ENCODE measurements at regions of chr3 and their contacts with region 1.

Region 1: DNA sequence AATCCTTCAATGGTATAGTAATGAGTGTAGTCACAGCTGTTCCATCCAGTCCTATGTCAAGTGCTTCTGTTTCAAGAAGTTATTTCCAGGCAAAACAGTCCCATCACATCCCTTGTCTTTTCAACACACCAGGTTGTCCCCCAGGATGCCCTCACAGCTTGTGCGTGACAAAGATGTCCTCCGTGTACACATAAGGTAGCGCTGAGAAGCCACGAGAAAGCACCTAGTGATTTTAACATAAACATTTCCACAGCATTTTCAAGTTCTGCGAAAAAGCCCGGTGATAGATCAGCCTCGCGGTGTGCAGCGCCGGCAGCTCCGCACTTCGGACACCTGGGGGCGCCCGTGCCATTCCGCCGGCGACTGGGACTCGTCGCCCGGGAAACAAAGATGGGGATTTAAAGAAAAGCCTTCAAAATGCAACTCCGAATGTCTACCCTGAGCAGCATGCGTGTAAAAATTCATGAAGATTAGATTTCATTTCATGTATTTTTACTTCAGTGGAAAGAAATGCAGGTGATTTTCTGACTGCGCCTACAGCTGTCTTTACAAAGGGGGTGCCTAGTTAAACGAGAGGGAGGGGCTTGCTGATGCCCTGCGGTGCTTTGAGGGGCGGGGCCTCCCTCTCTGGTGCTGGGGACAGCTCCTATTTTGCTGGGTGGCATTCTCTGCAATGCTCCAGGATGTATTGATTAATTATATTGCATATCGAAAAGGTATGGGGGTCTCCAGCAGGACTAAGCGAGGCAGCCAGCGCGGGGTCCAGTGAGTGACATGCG is 49.9 kb downstream of the KY start:
- DNase-seq: peak in 9 of 10 donors; percentile 55 to 84 (median 75)
- H3K4me3 ChIP-seq: peak overlapping the region in 52 of 59 donors; percentile 5 to 69 (median 40)
- H3K27ac ChIP-seq: peak overlapping the region in 51 of 59 donors; percentile 14 to 87 (median 73)
- H3K27me3 ChIP-seq: no peaks in the 10 kb centered on the region
- CTCF ChIP-seq: peak; percentile 59 to 99 (median 96)

Region 2: DNA sequence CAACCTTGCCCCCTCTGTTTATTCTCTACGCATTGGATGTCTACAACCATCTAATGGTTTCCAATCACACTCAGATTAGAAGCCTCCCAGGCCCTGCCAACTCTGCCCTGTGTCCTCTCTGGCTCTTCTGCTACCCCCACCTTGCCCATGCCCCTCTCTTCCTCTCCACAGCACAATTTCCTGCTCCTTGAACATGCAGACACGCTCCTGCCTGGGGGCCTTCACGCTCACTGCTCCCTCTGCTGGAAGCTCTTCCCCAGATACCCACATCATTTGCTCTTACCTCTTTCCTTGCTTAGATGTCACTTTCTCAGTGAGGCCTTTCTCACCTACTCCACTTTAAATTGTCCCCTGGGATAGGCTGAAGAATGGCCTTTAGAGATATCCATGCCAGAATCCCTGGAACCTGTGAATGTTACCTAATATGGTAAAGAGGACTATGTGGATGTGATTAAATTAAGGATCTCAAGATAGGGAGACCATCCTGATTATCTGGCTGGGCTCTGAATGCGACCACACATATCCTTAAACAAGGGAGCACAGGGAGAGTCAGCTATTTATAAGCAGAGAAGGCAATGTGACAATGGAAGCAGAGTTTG is 40.1 kb after region 1 on chr3:
- intact Hi-C with region 1: loop called in 1 of 2 experiments (anchors 2 kb)
- DNase-seq: peak in 1 of 10 donors; percentile 33
- H3K4me3 ChIP-seq: no peak overlapping the region
- H3K27ac ChIP-seq: no peak overlapping the region
- H3K27me3 ChIP-seq: no peaks in the 10 kb centered on the region
- CTCF ChIP-seq: peak in 54 of 56 donors; percentile 9 to 65 (median 39)

Region 3: GRCh38 chr3:135240426-135240825 is 639.6 kb after region 1 on chr3:
- intact Hi-C with region 1: loop called in 1 of 2 experiments (anchors 10 kb)
- DNase-seq: no peak
- H3K4me3 ChIP-seq: no peak overlapping the region
- H3K27ac ChIP-seq: no peak overlapping the region
- H3K27me3 ChIP-seq: no peaks in the 10 kb centered on the region
- CTCF ChIP-seq: peak in 38 of 56 donors; percentile 9 to 65 (median 26)

Region 4: DNA sequence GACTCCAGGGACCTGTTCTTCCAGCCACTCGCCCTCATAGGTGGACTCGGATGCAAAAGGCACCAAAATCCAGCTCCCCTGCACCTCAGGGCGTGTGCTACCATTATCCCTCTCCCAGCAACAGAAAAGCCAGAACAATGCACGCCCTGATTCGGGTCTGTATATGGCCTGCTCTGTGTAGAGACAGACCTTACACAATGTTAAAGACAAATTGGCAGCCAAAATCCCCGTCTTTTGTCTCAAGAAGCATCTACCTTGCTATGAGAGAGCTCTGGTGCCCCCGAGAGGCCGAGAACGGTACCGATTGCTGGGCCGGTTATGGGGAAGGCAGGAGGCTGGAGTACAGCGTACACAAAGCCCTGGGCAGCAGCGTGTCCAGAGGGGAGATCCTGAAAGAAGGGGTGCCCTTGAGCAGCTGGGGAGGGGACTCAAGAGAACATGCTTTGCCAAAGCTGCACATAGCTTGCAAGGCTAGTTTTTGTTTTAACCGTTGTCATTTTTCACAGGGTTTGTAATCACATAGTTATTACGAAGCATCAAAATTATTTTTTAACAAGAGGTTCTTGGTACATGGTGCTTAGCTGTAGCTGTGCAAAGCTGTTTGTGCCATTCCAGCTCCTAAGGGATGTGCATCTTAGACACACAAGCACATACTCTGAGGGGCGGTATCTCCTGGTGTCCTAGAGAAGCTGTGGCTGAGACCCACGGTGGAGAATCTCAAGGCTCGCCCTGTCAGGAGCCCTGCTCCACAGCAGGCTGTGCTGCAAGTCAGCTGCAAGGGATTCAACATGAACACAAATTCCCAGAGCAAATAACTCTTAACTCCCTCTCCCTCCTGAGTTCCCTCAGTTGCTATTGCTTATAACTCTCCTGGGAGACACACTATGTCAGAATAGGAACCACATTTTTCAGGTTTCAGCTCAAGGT is 903.1 kb after region 1 on chr3:
- intact Hi-C with region 1: loop called (anchors 5 to 10 kb)
- DNase-seq: peak; percentile 63 to 88 (median 80)
- H3K4me3 ChIP-seq: peak overlapping the region in 45 of 59 donors; percentile 4 to 61 (median 34)
- H3K27ac ChIP-seq: peak overlapping the region in 6 of 59 donors; percentile 1 to 51 (median 17)
- H3K27me3 ChIP-seq: peaks cover 0 to 8% (median 0%) of the 10 kb centered on the region in 45 donors
- CTCF ChIP-seq: peak; percentile 14 to 80 (median 68)

Region 5: DNA sequence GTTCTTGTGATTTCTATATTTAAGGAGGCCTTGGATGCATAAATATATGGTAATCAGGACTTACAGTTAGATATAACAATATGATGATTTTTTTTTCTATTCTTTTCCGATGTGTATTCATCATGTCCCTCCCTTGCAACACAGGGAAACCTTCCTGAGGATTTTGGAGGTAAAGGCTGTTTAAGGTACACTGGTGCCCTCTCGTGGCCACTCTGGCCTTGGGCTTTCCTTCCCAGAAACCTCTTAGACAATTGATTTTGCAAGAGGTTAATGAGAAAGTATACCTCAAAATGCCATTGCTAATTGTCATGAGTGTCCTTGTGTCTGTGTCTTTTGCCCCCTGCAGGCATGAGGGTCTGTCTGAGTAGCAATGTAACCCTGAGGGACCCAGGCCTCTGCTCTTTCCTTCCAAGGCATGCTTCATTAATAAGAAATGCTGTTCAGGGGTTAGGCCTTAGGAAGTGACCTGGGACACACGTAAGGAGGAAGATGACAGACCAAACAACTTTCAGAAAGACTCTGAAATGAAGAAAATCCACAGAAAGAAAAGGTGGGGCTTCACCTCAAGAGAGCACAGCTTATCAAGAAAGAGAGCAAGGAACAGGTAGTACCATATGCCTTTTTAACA is 1294.3 kb after region 1 on chr3:
- intact Hi-C with region 1: loop called (anchors 2 to 10 kb)
- DNase-seq: peak; percentile 59 to 88 (median 74)
- H3K4me3 ChIP-seq: no peak overlapping the region
- H3K27ac ChIP-seq: no peak overlapping the region
- H3K27me3 ChIP-seq: no peaks in the 10 kb centered on the region
- CTCF ChIP-seq: peak; percentile 65 to 89 (median 79)

Measured in dorsolateral prefrontal cortex (tissue), 120 donors.